ENCODE measurements at regions of chr3 and their contacts with region 1.

Region 1: DNA sequence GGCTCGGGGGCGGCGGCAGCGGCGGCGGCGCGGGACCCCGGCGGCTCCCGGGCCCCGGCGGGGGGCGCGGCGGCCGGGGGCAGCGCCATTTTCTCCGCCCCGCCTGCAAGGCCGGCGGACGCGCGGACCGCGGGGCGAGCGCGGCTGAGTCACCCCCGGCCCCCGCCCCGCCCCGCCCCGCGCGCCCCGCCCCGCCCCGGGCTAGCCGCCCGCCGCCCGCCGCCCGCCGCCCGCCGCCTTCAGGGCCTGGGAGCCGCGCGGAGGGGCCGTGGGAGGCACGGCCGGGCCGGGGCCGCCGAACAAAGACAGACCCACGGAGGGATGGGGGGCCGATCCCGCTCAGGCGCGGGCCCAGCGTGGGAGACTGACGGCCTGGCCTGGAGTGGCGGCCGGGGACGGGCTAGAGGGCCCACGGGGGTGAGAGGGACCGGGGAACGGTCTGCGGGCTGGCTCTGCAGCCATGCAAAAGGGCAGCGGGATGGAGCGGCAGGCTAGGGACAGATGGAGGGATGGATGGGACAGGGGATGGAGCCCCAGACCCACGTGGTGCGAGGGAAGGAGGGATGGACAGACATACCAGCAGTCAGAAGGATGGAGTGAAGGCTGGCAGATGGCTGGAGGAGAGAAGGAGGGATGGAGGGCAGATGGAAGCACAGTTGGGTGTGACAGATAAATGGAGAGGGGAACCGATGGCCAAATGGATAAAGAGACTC is at the start of gene EIF4E3:
- DNase-seq: peak; percentile 54
- ATAC-seq: peak; percentile 56
- H3K4me3 Mint-ChIP-seq: peak within 1 kb of the TSS; percentile 97
- H3K27ac Mint-ChIP-seq: peak within 1 kb of the TSS; percentile 96
- H3K4me1 Mint-ChIP-seq: peaks cover 65% of the 10 kb centered on the region
- H3K27me3 Mint-ChIP-seq: no peaks in the 10 kb centered on the region
- total RNA-seq, gene EIF4E3: 56.5 to 61.9 TPM

Region 2: GRCh38 chr3:71681224-71681668 is 44.2 kb before region 1 on chr3:
- CTCF ChIA-PET with region 1: no interaction called
- DNase-seq: no peak
- ATAC-seq: peak; percentile 30
- H3K4me3 Mint-ChIP-seq: no peak overlapping the region
- H3K27ac Mint-ChIP-seq: no peak overlapping the region
- H3K4me1 Mint-ChIP-seq: peaks cover 9% of the 10 kb centered on the region
- H3K27me3 Mint-ChIP-seq: no peaks in the 10 kb centered on the region

Region 3: DNA sequence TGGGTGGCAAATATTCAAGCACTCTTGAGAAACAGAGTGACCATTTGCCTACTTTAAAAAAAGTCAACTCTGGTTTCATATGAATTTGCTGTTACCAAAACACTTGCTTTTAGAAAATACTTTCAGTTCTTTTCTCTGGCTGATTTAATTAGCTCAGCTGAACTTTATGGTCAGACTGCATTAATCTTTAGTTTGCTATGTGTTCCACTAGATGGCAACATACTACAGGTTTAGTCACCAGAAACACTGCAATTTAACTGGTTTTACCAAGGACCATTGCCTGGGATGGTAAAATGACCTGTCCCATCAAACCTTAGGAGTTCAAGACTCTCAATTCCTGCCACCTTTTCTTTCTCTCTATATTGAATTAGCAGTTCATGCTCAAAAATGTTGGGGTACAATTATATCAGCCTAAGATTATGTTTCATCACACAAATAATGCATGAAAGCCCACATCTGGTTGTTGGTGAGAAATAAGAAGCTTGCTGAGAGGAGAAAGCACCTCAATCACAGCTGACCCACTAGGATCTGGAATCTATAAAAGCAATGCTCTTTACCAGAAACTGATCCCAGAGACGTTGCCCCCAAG is 14.4 kb before region 1 on chr3:
- CTCF ChIA-PET with region 1: interaction called, 35 read pairs
- DNase-seq: no peak
- ATAC-seq: peak; percentile 77
- H3K4me3 Mint-ChIP-seq: no peak overlapping the region
- H3K27ac Mint-ChIP-seq: peak overlapping the region; percentile 57
- H3K4me1 Mint-ChIP-seq: peaks cover 65% of the 10 kb centered on the region
- H3K27me3 Mint-ChIP-seq: no peaks in the 10 kb centered on the region

Region 4: GRCh38 chr3:71776538-71776937 is 51.1 kb after region 1 on chr3:
- CTCF ChIA-PET with region 1: interaction called, 22 read pairs
- DNase-seq: no peak
- ATAC-seq: no peak
- H3K4me3 Mint-ChIP-seq: no peak overlapping the region
- H3K27ac Mint-ChIP-seq: no peak overlapping the region
- H3K4me1 Mint-ChIP-seq: peaks cover 43% of the 10 kb centered on the region
- H3K27me3 Mint-ChIP-seq: peaks cover 13% of the 10 kb centered on the region

Region 5: DNA sequence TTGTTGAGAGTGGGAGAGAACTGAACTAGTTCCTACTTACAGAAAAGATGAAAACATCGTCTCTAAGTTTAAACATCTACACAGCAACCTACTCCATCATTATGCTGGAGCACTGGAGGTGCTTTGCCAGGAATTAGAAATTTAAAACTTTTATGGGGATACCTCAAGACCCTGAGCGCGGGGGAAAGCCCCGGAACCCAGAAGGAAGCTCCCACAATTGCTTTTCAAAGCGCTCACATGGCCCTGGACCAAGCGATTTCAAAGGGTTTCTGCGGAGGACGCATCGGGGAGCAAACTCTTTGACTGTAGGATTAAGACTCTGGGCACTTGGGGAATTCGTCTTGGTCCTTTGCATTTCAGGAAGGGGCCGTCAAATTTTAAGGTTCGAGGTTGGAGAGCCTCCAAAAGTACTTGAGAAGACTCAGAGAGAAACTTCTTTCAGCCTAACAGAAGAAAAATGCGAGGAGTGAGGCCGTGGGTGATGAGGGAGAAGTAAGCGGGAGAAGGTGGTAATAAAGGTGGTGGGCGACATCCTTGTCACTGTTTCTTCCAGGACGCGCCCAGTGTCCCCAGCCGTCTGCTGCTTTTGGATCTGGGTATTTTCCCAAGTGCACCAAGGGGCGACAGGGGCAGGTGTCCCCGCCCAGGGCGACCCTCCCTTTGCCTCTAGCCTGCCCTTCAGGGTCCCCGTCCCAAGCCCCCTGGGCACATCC is 58.9 kb after region 1 on chr3:
- CTCF ChIA-PET with region 1: interaction called, 22 read pairs
- DNase-seq: no peak
- ATAC-seq: no peak
- H3K4me3 Mint-ChIP-seq: peak overlapping the region; percentile 79
- H3K27ac Mint-ChIP-seq: peak overlapping the region; percentile 35
- H3K4me1 Mint-ChIP-seq: peaks cover 42% of the 10 kb centered on the region
- H3K27me3 Mint-ChIP-seq: peaks cover 60% of the 10 kb centered on the region

Region 6: GRCh38 chr3:71859123-71859519 is 133.7 kb after region 1 on chr3:
- CTCF ChIA-PET with region 1: interaction called, 46 read pairs
- DNase-seq: no peak
- ATAC-seq: peak; percentile 80
- H3K4me3 Mint-ChIP-seq: no peak overlapping the region
- H3K27ac Mint-ChIP-seq: no peak overlapping the region
- H3K4me1 Mint-ChIP-seq: peaks cover 15% of the 10 kb centered on the region
- H3K27me3 Mint-ChIP-seq: peaks cover 26% of the 10 kb centered on the region

Region 7: DNA sequence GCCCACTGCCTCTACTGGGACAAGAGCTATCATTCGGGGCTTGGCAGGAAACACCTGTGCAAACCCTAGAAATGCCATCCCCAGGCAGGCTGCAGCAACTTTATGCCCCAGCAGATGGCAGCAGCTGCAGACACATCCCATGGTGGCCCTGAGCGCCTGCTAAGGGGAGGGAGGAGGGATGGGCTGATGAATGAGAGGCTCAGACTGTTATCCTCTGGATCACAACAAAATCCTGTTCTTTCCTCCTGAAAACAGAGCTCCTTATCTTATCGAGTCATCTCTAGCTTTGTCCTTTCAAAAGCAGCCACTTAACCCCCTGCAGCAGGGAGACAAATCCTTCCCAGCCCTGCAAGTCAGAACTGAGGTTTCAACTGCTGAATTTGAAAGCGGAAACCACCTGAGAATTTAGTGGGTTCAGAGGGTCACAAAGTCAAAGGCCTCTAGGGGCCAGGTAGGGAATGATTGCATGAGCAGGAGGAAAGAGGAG is 150.1 kb after region 1 on chr3:
- CTCF ChIA-PET with region 1: interaction called, 17 read pairs
- DNase-seq: peak; percentile 86
- ATAC-seq: peak; percentile 96
- H3K4me3 Mint-ChIP-seq: no peak overlapping the region
- H3K27ac Mint-ChIP-seq: no peak overlapping the region
- H3K4me1 Mint-ChIP-seq: peaks cover 23% of the 10 kb centered on the region
- H3K27me3 Mint-ChIP-seq: peaks cover 6% of the 10 kb centered on the region